Ascending aorta (tissue), 2 donors: ENCODE measurements at regions of chr13 and their contacts with region 1.

Region 1: GRCh38 chr13:44218501-44219240 is 155.0 kb upstream of the SERP2 start:
- DNase-seq: peak; percentile 37 to 90
- H3K4me3 ChIP-seq: no peak overlapping the region
- H3K27ac ChIP-seq: peak overlapping the region; percentile 68 to 78
- H3K4me1 ChIP-seq: peaks cover 10 to 33% of the 10 kb centered on the region in 2 donors
- H3K27me3 ChIP-seq: no peaks in the 10 kb centered on the region
- CTCF ChIP-seq: no peak

Region 2: DNA sequence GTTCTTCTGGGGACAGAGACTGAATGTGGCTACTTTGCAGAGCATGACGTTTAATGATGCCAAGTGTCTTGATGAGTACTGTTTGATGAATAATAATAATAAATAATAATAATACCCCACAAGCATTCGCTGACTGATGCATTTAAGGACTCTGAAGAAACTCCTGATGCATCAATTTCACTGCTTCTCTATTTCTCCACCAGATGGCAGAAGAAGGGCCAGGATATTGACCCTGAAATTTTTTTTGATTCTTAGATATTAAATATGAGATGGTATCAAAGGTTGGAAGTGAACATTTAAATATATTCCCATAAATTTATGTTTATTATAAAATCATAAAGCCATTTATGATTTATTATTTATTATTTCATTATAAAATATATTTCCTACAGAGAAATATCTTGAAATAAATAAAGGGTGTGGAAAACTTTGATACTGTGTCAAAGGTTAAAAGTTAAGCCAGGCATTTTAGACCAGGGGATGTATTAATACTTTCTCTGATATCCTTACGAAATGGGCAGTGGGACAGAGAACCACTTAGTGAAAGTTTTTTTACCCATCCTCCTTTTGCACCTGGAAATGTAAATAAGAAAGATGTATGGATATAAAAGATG is 168.1 kb before region 1 on chr13:
- intact Hi-C with region 1: loop called (anchors 5 kb)
- DNase-seq: no peak
- H3K4me3 ChIP-seq: no peak overlapping the region
- H3K27ac ChIP-seq: no peak overlapping the region
- H3K4me1 ChIP-seq: peaks cover 0 to 24% of the 10 kb centered on the region in 2 donors
- H3K27me3 ChIP-seq: no peaks in the 10 kb centered on the region
- CTCF ChIP-seq: peak; percentile 50 to 80 (median 78)

Region 3: GRCh38 chr13:44116562-44117332 is 101.9 kb before region 1 on chr13:
- intact Hi-C with region 1: no loop called
- DNase-seq: no peak
- H3K4me3 ChIP-seq: no peak overlapping the region
- H3K27ac ChIP-seq: peak overlapping the region; percentile 64 to 74
- H3K4me1 ChIP-seq: peaks cover 2 to 31% of the 10 kb centered on the region in 2 donors
- H3K27me3 ChIP-seq: no peaks in the 10 kb centered on the region
- CTCF ChIP-seq: peak in 1 of 3 experiments; percentile 7

Region 4: GRCh38 chr13:44237276-44237767 is 18.7 kb after region 1 on chr13:
- intact Hi-C with region 1: loop called (anchors 2 kb)
- DNase-seq: peak; percentile 64 to 92
- H3K4me3 ChIP-seq: no peak overlapping the region
- H3K27ac ChIP-seq: peak overlapping the region; percentile 86 to 92
- H3K4me1 ChIP-seq: peaks cover 9 to 19% of the 10 kb centered on the region in 2 donors
- H3K27me3 ChIP-seq: no peaks in the 10 kb centered on the region
- CTCF ChIP-seq: no peak

Region 5: GRCh38 chr13:44274452-44275205 is 56.0 kb after region 1 on chr13:
- intact Hi-C with region 1: loop called (anchors 1 kb)
- DNase-seq: no peak
- H3K4me3 ChIP-seq: peak overlapping the region; percentile 44 to 55
- H3K27ac ChIP-seq: peak overlapping the region; percentile 88 to 92
- H3K4me1 ChIP-seq: peaks cover 9 to 45% of the 10 kb centered on the region in 2 donors
- H3K27me3 ChIP-seq: no peaks in the 10 kb centered on the region
- CTCF ChIP-seq: no peak

Region 6: GRCh38 chr13:44300895-44301638 is 82.4 kb after region 1 on chr13:
- intact Hi-C with region 1: loop called (anchors 5 kb)
- DNase-seq: peak; percentile 53 to 85
- H3K4me3 ChIP-seq: no peak overlapping the region
- H3K27ac ChIP-seq: peak overlapping the region; percentile 77 to 88
- H3K4me1 ChIP-seq: peaks cover 33 to 61% of the 10 kb centered on the region in 2 donors
- H3K27me3 ChIP-seq: no peaks in the 10 kb centered on the region
- CTCF ChIP-seq: no peak

Region 7: DNA sequence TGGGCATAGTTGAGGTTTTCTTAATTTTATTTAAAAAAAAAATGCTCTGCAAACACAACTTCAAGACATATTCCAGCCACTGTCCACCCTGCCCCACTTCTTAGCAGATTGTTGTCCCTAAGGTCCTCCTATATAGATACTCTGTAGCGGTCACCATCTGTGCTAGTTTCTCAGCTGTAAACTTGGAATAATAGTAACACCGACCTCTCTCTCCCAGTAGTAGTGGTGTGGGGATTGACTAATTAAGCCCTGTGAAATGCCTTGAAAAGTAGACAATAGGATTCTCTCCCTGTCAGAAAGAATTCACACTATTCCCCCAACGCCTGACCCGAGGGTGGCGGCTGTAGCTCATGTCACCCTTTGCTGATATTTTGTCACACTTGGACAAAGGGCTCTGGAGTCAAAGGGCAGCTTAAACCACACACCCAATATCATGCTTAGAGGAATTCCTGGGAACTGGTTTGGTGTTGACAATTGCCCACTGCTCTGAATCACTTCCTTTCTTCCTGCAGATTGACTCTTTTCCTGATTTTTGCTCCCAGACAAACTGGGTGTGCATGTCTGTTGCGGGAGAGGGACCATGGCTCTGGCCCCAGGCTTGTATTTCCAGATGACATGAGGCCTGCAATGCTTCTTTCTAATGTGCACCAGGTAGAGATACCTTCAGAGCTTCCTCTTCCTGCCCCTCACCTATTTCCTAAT is 145.8 kb after region 1 on chr13:
- intact Hi-C with region 1: loop called (anchors 5 kb)
- DNase-seq: no peak
- H3K4me3 ChIP-seq: no peak overlapping the region
- H3K27ac ChIP-seq: no peak overlapping the region
- H3K4me1 ChIP-seq: peaks cover 0 to 8% of the 10 kb centered on the region in 2 donors
- H3K27me3 ChIP-seq: no peaks in the 10 kb centered on the region
- CTCF ChIP-seq: no peak